ENCODE measurements at regions of chr19 and their contacts with region 1.

Region 1: GRCh38 chr19:1967087-1967608 is 26.2 kb downstream of the CSNK1G2 start:
- DNase-seq: no peak
- ATAC-seq: no peak
- H3K4me3 ChIP-seq: no peak overlapping the region
- H3K27ac ChIP-seq: no peak overlapping the region
- H3K4me1 ChIP-seq: no peaks in the 10 kb centered on the region
- H3K27me3 ChIP-seq: no peaks in the 10 kb centered on the region
- CTCF ChIP-seq: no peak

Region 2: GRCh38 chr19:1945899-1946298 is 21.2 kb before region 1 on chr19:
- CTCF ChIA-PET with region 1: no interaction called
- POLR2A ChIA-PET with region 1: interaction called, 13 read pairs
- in situ Hi-C with region 1: no loop called
- intact Hi-C with region 1: no loop called
- DNase-seq: no peak
- ATAC-seq: no peak
- H3K4me3 ChIP-seq: no peak overlapping the region
- H3K27ac ChIP-seq: no peak overlapping the region
- H3K4me1 ChIP-seq: peaks cover 10% of the 10 kb centered on the region; the same call in 1 of the 2 replicates
- H3K27me3 ChIP-seq: no peaks in the 10 kb centered on the region
- CTCF ChIP-seq: peak; percentile 78; the same call in 1 of the 2 replicates

Region 3: GRCh38 chr19:2151339-2152229 is 184.4 kb after region 1 on chr19 and contains the start of gene AP3D1:
- CTCF ChIA-PET with region 1: no interaction called
- POLR2A ChIA-PET with region 1: no interaction called
- in situ Hi-C with region 1: no loop called
- intact Hi-C with region 1: no loop called
- DNase-seq: peak; percentile 97
- ATAC-seq: peak; percentile 95
- H3K4me3 ChIP-seq: peak within 1 kb of the TSS; percentile 76 to 91
- H3K27ac ChIP-seq: peak within 1 kb of the TSS; percentile 89
- H3K4me1 ChIP-seq: peaks cover 17% of the 10 kb centered on the region
- H3K27me3 ChIP-seq: no peaks in the 10 kb centered on the region
- CTCF ChIP-seq: no peak
- total RNA-seq, gene AP3D1: 167 TPM